Transverse colon (tissue), 4 donors: ENCODE measurements at regions of chr7 and their contacts with region 1.

Region 1: GRCh38 chr7:150787321-150788281 is 12.6 kb downstream of the TMEM176B start:
- DNase-seq: no peak
- H3K4me3 ChIP-seq: no peak overlapping the region
- H3K27ac ChIP-seq: peak overlapping the region; percentile 83 to 89 (median 86)
- H3K4me1 ChIP-seq: peaks cover 26 to 71% (median 49%) of the 10 kb centered on the region in 4 donors
- H3K27me3 ChIP-seq: no peaks in the 10 kb centered on the region
- CTCF ChIP-seq: no peak
- EP300 ChIP-seq: no peak
- POLR2A ChIP-seq: no peak

Region 2: DNA sequence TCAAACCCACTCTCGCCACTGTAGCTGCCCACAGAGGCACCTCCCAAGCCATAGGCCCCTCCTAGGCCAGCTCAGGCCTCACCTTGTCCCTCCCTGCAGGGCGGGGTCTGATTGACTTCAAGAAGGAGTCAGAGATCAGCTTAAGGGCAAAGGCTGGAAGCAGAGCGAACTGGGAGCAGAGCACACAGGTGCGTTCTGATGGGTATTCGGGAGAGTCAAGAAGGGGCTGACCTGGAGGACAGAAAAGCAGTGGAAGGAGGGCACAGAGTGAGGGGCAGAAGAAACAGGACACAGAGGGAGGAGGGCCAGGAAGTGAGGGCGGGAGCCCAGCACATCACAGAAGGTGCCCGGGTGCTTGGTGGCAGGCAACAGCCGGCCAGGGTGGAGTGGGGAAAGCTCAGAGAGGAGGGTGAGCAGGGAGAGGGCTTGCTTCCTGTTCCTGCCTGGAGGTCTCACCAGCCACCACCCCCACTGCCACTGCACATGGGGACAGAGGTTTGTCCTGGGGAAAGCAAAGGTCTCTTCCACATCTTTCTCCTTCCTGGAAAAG is 64.8 kb after region 1 on chr7 and contains the start of gene AOC1:
- in situ Hi-C with region 1: loop called in 1 of 4 experiments (anchors 10 kb)
- intact Hi-C with region 1: no loop called
- DNase-seq: peak; percentile 91
- H3K4me3 ChIP-seq: peak within 1 kb of the TSS; percentile 3 to 54 (median 43)
- H3K27ac ChIP-seq: peak within 1 kb of the TSS; percentile 70 to 86 (median 82)
- H3K4me1 ChIP-seq: peaks cover 0 to 13% (median 0%) of the 10 kb centered on the region in 4 donors
- H3K27me3 ChIP-seq: no peaks in the 10 kb centered on the region
- CTCF ChIP-seq: no peak
- EP300 ChIP-seq: no peak
- POLR2A ChIP-seq: peak; percentile 96
- total RNA-seq, gene AOC1: 143 to 687 (median 427) TPM